ENCODE measurements at regions of chr3 and their contacts with region 1.

Region 1: DNA sequence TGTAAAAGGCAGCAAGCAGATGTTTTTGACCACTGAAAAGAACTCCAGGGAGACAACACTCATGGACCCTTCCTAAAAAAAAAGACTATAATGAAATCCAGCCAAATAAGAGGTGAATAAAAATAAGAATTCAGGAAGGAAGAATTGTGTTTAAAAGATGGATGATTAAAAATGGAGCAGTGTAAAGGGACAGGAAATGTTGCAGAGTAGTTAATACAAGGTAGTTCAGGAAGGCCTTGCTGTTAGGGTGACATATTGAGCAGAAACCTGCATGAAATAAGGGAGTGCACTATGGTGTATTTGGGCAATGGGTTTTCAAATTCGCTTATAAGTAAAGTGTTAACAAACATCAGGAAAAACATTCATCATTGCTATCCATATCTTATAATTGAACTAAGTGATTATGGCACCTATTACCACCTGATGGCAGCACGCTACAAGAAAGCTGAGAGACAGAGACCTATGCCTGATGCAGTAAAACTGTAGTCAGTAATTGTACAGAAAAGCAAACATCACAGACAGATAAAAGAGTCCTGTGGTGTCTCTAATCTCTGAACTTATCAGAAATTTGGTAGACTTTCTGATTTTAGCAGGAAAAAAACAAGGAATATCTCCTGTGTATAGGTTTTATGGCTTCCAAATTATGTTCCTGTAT is 5.8 kb upstream of the DBR1 start:
- DNase-seq: peak in 5 of 9 experiments; percentile 20 to 64 (median 32)
- ATAC-seq: peak; percentile 91
- H3K4me3 ChIP-seq: no peak overlapping the region
- H3K4me3 Mint-ChIP-seq: no peak overlapping the region
- H3K27ac ChIP-seq: no peak overlapping the region
- H3K27ac Mint-ChIP-seq: no peak overlapping the region
- H3K4me1 ChIP-seq: no peaks in the 10 kb centered on the region
- H3K4me1 Mint-ChIP-seq: no peaks in the 10 kb centered on the region
- H3K27me3 ChIP-seq: peaks cover 0 to 3% of the 10 kb centered on the region in 2 experiments
- H3K27me3 Mint-ChIP-seq: peaks cover 5% of the 10 kb centered on the region
- CTCF ChIP-seq: no peak

Region 2: DNA sequence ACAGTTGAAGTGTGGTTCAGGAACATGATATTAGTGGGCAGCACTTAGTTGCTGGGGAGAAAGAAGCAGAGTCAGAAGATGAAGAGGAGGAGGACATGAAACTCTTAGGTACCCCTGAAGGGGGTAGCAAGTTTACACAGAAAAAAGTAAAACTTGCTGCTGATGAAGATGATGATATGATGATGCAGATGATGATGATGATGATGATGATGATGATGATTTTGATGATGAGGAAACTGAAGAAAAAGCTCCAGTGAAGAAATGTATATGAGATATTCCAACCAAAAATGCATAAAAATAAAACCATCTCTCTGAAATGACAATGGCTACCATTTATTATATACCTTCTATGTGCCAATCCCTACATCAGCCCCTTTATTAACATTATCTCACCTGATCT is 456.3 kb before region 1 on chr3:
- CTCF ChIA-PET with region 1: no interaction called
- POLR2A ChIA-PET with region 1: no interaction called
- intact Hi-C with region 1: no loop called
- DNase-seq: no peak
- ATAC-seq: no peak
- H3K4me3 ChIP-seq: no peak overlapping the region
- H3K4me3 Mint-ChIP-seq: no peak overlapping the region
- H3K27ac ChIP-seq: no peak overlapping the region
- H3K27ac Mint-ChIP-seq: no peak overlapping the region
- H3K4me1 ChIP-seq: no peaks in the 10 kb centered on the region
- H3K4me1 Mint-ChIP-seq: no peaks in the 10 kb centered on the region
- H3K27me3 ChIP-seq: no peaks in the 10 kb centered on the region
- H3K27me3 Mint-ChIP-seq: no peaks in the 10 kb centered on the region
- CTCF ChIP-seq: no peak

Region 3: DNA sequence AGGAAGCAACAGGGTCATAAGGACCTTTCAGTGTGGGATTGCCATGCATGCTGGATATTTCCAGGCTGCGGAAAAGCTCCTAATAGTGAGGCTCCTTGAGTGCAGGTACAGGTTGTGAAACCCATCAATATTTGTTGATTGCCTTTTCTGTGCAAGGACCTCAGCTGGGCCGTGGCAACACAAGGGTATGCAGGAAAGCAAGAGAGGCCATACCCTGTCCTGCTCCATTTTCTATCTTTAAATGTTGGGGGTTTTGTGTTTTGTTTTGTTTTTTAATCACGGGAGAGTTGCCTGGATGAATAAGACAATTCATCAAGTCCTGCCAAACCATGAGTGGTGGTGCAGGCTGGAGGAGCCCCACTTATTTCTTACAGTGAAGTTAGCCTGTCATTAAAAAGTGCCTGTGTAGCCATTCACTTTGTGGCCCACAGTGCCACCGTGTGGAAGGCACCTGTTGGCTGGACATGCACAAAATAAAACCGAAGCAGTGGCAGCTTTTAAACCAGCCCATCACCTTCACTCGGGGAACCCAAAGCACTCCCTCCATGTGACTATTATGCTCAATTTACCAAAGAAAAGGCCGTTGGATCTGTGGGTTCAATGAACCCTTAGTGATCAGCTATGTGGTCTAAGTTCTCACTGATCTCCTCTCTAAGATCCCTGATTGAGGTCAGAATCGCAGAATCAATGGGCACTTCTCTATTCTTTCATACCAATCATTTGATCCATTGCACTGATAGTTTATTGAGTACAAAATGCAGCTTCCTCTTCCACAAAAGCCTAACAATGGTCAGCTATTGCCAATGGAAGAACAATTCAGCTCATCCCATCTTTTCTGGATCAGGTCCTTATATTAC is 128.3 kb before region 1 on chr3:
- CTCF ChIA-PET with region 1: no interaction called
- POLR2A ChIA-PET with region 1: no interaction called
- intact Hi-C with region 1: no loop called
- DNase-seq: no peak
- ATAC-seq: no peak
- H3K4me3 ChIP-seq: no peak overlapping the region
- H3K4me3 Mint-ChIP-seq: no peak overlapping the region
- H3K27ac ChIP-seq: no peak overlapping the region
- H3K27ac Mint-ChIP-seq: no peak overlapping the region
- H3K4me1 ChIP-seq: no peaks in the 10 kb centered on the region
- H3K4me1 Mint-ChIP-seq: no peaks in the 10 kb centered on the region
- H3K27me3 ChIP-seq: peaks cover 3% of the 10 kb centered on the region in 2 experiments
- H3K27me3 Mint-ChIP-seq: peaks cover 27% of the 10 kb centered on the region
- CTCF ChIP-seq: no peak

Region 4: DNA sequence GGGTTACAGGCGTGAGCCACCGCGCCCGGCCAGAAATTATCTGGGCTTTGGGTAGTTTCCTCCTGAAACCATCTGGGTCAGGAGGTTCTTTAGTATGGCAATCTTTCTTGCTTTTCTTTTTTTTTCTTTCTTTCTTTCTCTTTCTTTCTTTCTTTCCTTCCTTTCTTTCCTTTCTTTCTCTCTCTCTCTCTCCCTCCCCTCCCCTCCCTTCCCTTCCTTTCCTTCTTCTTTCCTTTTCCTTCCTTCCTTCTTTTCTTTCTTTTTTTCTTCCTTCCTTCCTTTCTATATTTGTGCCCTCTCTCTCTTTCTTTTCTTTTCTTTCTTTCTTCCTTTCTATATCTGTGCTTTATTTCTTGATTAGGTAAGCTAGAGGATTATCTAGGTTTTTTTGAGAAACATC is 22.8 kb before region 1 on chr3:
- CTCF ChIA-PET with region 1: no interaction called
- POLR2A ChIA-PET with region 1: no interaction called
- intact Hi-C with region 1: no loop called
- DNase-seq: no peak
- ATAC-seq: no peak
- H3K4me3 ChIP-seq: no peak overlapping the region
- H3K4me3 Mint-ChIP-seq: no peak overlapping the region
- H3K27ac ChIP-seq: no peak overlapping the region
- H3K27ac Mint-ChIP-seq: no peak overlapping the region
- H3K4me1 ChIP-seq: no peaks in the 10 kb centered on the region
- H3K4me1 Mint-ChIP-seq: no peaks in the 10 kb centered on the region
- H3K27me3 ChIP-seq: no peaks in the 10 kb centered on the region
- H3K27me3 Mint-ChIP-seq: no peaks in the 10 kb centered on the region
- CTCF ChIP-seq: no peak

Region 5: GRCh38 chr3:138222131-138222941 is 41.8 kb after region 1 on chr3:
- CTCF ChIA-PET with region 1: interaction called, 3 read pairs
- POLR2A ChIA-PET with region 1: no interaction called
- intact Hi-C with region 1: loop called (anchors 5 kb)
- DNase-seq: peak in 1 of 9 experiments; percentile 5
- ATAC-seq: no peak
- H3K4me3 ChIP-seq: no peak overlapping the region
- H3K4me3 Mint-ChIP-seq: no peak overlapping the region
- H3K27ac ChIP-seq: no peak overlapping the region
- H3K27ac Mint-ChIP-seq: peak overlapping the region; percentile 79
- H3K4me1 ChIP-seq: peaks cover 15% of the 10 kb centered on the region
- H3K4me1 Mint-ChIP-seq: peaks cover 51% of the 10 kb centered on the region
- H3K27me3 ChIP-seq: no peaks in the 10 kb centered on the region
- H3K27me3 Mint-ChIP-seq: no peaks in the 10 kb centered on the region
- CTCF ChIP-seq: no peak

Region 6: GRCh38 chr3:138271189-138271794 is 90.8 kb after region 1 on chr3:
- CTCF ChIA-PET with region 1: interaction called, 5 read pairs
- POLR2A ChIA-PET with region 1: no interaction called
- intact Hi-C with region 1: loop called in 1 of 2 experiments (anchors 5 kb)
- DNase-seq: no peak
- ATAC-seq: no peak
- H3K4me3 ChIP-seq: no peak overlapping the region
- H3K4me3 Mint-ChIP-seq: no peak overlapping the region
- H3K27ac ChIP-seq: no peak overlapping the region
- H3K27ac Mint-ChIP-seq: no peak overlapping the region
- H3K4me1 ChIP-seq: no peaks in the 10 kb centered on the region
- H3K4me1 Mint-ChIP-seq: no peaks in the 10 kb centered on the region
- H3K27me3 ChIP-seq: no peaks in the 10 kb centered on the region
- H3K27me3 Mint-ChIP-seq: no peaks in the 10 kb centered on the region
- CTCF ChIP-seq: no peak

Region 7: DNA sequence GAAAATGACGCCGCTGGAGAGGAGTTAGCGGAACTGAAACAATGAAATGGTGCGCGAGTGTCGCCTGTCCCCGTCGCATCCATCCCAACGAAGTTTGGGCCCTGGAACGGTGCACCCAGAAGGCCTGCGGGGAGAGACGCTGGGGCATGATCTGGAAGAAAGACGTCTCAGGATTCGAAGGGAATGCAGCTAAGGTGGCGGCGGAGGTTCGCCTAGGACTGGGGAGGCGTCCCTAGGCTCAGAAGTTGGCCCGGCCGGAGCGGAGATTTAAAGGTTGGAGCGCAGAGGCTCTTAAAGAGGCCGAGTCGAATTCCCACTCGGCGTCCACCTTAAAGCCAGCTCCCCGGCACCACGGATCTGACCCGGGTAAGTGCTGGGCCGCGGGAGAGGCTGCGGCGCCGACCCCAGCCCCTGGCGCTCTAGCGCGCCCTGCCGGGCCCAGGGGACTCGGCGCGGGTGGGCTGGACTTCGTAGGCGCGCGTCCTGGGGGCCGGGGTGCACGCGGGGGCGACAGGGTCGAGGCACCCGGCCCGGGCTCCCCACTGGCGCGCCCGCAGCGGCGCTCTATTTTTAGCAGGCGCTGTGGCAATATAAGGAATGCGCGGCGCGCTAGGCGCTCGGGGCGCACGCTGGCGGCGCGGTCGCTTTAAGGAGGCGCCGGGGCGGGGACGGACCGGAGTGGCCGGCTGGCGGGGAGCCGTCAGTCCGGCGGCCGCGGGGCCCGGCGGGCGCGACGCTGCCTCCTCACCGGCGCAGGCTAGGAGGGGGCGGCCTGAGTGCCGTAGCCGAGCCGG is 167.7 kb after region 1 on chr3 and contains the start of gene MRAS:
- CTCF ChIA-PET with region 1: no interaction called
- POLR2A ChIA-PET with region 1: no interaction called
- intact Hi-C with region 1: loop called in 1 of 2 experiments (anchors 1 kb)
- DNase-seq: peak in 3 of 9 experiments; percentile 20 to 46 (median 45)
- ATAC-seq: peak; percentile 58
- H3K4me3 ChIP-seq: peak within 1 kb of the TSS; percentile 45 to 52
- H3K4me3 Mint-ChIP-seq: peak within 1 kb of the TSS; percentile 92
- H3K27ac ChIP-seq: no peak within 1 kb of the TSS
- H3K27ac Mint-ChIP-seq: no peak within 1 kb of the TSS
- H3K4me1 ChIP-seq: no peaks in the 10 kb centered on the region
- H3K4me1 Mint-ChIP-seq: peaks cover 6% of the 10 kb centered on the region
- H3K27me3 ChIP-seq: peaks cover 0 to 8% of the 10 kb centered on the region in 2 experiments
- H3K27me3 Mint-ChIP-seq: peaks cover 36% of the 10 kb centered on the region
- CTCF ChIP-seq: peak; percentile 16
- total RNA-seq, gene MRAS: not detected

Region 8: DNA sequence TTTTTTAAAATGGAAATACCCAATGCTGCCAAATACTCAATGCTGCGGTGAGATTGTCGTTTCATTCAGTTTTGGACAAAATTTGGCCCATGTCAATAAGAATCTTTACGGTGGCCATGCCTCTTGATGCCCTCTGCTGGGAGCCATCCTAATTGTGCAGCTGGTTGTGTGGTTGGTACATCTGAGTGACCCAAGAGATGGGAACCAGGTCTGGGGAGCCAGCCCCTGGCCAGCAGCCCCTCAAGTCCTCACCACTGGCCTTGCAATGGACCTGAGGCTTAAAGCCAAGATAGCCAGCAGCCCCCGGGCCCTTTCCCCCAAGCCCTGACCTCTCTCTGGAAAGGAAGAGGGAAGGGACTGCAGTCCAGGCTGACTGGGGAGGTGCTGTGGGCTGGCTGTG is 217.5 kb after region 1 on chr3:
- CTCF ChIA-PET with region 1: no interaction called
- POLR2A ChIA-PET with region 1: no interaction called
- intact Hi-C with region 1: loop called (anchors 5 kb)
- DNase-seq: peak in 1 of 9 experiments; percentile 18
- ATAC-seq: no peak
- H3K4me3 ChIP-seq: no peak overlapping the region
- H3K4me3 Mint-ChIP-seq: no peak overlapping the region
- H3K27ac ChIP-seq: no peak overlapping the region
- H3K27ac Mint-ChIP-seq: no peak overlapping the region
- H3K4me1 ChIP-seq: no peaks in the 10 kb centered on the region
- H3K4me1 Mint-ChIP-seq: no peaks in the 10 kb centered on the region
- H3K27me3 ChIP-seq: no peaks in the 10 kb centered on the region
- H3K27me3 Mint-ChIP-seq: peaks cover 8% of the 10 kb centered on the region
- CTCF ChIP-seq: no peak

Measured in CD8-positive, alpha-beta T cell (primary cell).